ENCODE measurements at regions of chr2 and their contacts with region 1.

Region 1: GRCh38 chr2:155310589-155310988 is 612.1 kb downstream of the KCNJ3 start:
- DNase-seq: peak; percentile 33
- H3K4me3 ChIP-seq: no peak overlapping the region
- H3K27ac ChIP-seq: no peak overlapping the region
- H3K4me1 ChIP-seq: no peaks in the 10 kb centered on the region
- H3K27me3 ChIP-seq: no peaks in the 10 kb centered on the region
- CTCF ChIP-seq: peak in 1 of 2 donors; percentile 8
- POLR2A ChIP-seq: no peak

Region 2: DNA sequence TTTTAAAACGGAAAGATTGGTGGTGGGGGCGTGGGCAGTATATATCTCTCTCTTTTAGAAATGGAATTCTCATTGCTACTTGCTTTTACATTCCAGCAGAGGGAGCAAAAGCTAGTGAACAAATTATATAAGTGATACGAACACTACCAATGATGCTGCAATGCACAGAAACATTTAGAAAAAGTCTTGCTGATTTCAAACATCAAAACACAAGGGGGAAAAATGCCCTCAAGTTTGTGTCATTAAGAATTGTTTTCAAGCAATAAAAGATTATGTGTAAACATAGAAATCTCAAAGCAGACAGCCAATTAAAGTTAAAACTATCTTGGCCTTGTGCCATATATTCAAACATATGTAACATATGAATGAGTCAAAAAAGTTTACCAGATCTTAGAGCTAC is 908.4 kb before region 1 on chr2:
- CTCF ChIA-PET with region 1: interaction called, 12 read pairs
- POLR2A ChIA-PET with region 1: no interaction called
- dilution Hi-C with region 1: no loop called
- intact Hi-C with region 1: loop called (anchors 1 kb)
- DNase-seq: peak; percentile 33
- H3K4me3 ChIP-seq: no peak overlapping the region
- H3K27ac ChIP-seq: no peak overlapping the region
- H3K4me1 ChIP-seq: no peaks in the 10 kb centered on the region
- H3K27me3 ChIP-seq: no peaks in the 10 kb centered on the region
- CTCF ChIP-seq: peak in 1 of 2 donors; percentile 30
- POLR2A ChIP-seq: no peak

Region 3: GRCh38 chr2:154439156-154439555 is 871.4 kb before region 1 on chr2:
- CTCF ChIA-PET with region 1: interaction called, 18 read pairs
- POLR2A ChIA-PET with region 1: no interaction called
- dilution Hi-C with region 1: no loop called
- intact Hi-C with region 1: no loop called
- DNase-seq: no peak
- H3K4me3 ChIP-seq: no peak overlapping the region
- H3K27ac ChIP-seq: no peak overlapping the region
- H3K4me1 ChIP-seq: no peaks in the 10 kb centered on the region
- H3K27me3 ChIP-seq: no peaks in the 10 kb centered on the region
- CTCF ChIP-seq: no peak
- POLR2A ChIP-seq: no peak

Region 4: GRCh38 chr2:155273323-155273722 is 37.3 kb before region 1 on chr2:
- CTCF ChIA-PET with region 1: interaction called, 3 read pairs
- POLR2A ChIA-PET with region 1: no interaction called
- dilution Hi-C with region 1: no loop called
- intact Hi-C with region 1: loop called (anchors 1 kb)
- DNase-seq: no peak
- H3K4me3 ChIP-seq: no peak overlapping the region
- H3K27ac ChIP-seq: no peak overlapping the region
- H3K4me1 ChIP-seq: no peaks in the 10 kb centered on the region
- H3K27me3 ChIP-seq: no peaks in the 10 kb centered on the region
- CTCF ChIP-seq: no peak
- POLR2A ChIP-seq: no peak

Region 5: DNA sequence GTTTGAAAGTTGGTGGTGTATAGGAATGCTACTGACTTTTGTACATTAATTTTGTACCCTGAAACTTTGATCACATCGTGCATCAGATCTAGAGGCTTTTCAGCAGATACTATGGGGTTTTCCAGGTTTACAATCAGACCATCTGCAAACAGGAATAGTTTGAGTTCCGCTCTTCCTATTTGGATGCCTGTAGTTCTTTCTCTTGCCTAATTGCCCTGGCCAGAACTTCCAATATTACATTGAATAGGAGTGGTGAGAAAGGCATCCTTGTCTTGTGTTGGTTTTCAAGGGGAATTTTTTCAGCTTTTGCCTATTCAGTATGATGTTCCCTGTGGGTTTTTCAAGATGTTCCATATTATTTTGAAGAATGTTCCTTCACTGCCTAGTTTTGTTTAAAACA is 21.4 kb after region 1 on chr2:
- CTCF ChIA-PET with region 1: no interaction called
- POLR2A ChIA-PET with region 1: no interaction called
- dilution Hi-C with region 1: no loop called
- intact Hi-C with region 1: no loop called
- DNase-seq: no peak
- H3K4me3 ChIP-seq: no peak overlapping the region
- H3K27ac ChIP-seq: no peak overlapping the region
- H3K4me1 ChIP-seq: no peaks in the 10 kb centered on the region
- H3K27me3 ChIP-seq: no peaks in the 10 kb centered on the region
- CTCF ChIP-seq: no peak
- POLR2A ChIP-seq: no peak